ENCODE measurements at regions of chr14 and their contacts with region 1.

Region 1: DNA sequence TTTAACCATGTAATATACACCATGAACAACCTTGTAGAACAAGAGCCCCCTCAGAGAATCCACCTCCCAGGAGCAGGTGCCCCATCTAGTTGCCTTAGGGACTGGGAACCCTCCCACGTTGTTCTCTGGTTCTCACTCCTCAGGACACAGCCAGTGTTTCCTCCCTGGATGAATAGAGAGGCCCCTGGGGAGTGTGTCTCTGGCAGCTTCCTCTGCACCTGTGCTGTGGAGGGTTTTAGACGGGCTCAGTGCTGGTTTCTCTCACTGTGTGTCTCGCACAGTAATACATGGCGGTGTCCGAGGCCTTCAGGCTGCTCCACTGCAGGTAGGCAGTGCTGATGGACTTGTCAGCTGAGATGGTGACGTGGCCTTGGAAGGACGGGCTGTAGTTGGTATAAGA is 581.3 kb downstream of the TMEM121 start:
- DNase-seq: no peak
- H3K4me3 Mint-ChIP-seq: no peak overlapping the region
- H3K27ac Mint-ChIP-seq: no peak overlapping the region
- H3K4me1 Mint-ChIP-seq: no peaks in the 10 kb centered on the region
- H3K27me3 Mint-ChIP-seq: peaks cover 2% of the 10 kb centered on the region

Region 2: GRCh38 chr14:106094654-106095189 is 13.0 kb before region 1 on chr14:
- CTCF ChIA-PET with region 1: interaction called, 10 read pairs
- intact Hi-C with region 1: no loop called
- DNase-seq: peak; percentile 89
- H3K4me3 Mint-ChIP-seq: no peak overlapping the region
- H3K27ac Mint-ChIP-seq: no peak overlapping the region
- H3K4me1 Mint-ChIP-seq: peaks cover 3% of the 10 kb centered on the region
- H3K27me3 Mint-ChIP-seq: no peaks in the 10 kb centered on the region